Endothelial cell of umbilical vein (primary cell): ENCODE measurements at regions of chr10 and their contacts with region 1.

Region 1: GRCh38 chr10:103231047-103231551 is 14.6 kb upstream of the RPEL1 start:
- DNase-seq: peak; percentile 92
- H3K4me3 ChIP-seq: no peak overlapping the region
- H3K27ac ChIP-seq: peak overlapping the region; percentile 97
- H3K4me1 ChIP-seq: peaks cover 32% of the 10 kb centered on the region
- H3K27me3 ChIP-seq: no peaks in the 10 kb centered on the region
- CTCF ChIP-seq: no peak
- POLR2A ChIP-seq: peak; percentile 60

Region 2: GRCh38 chr10:103181244-103181643 is 49.9 kb before region 1 on chr10:
- CTCF ChIA-PET with region 1: interaction called, 5 read pairs
- POLR2A ChIA-PET with region 1: no interaction called
- dilution Hi-C with region 1: no loop called
- intact Hi-C with region 1: loop called (anchors 1 kb)
- DNase-seq: peak; percentile 91
- H3K4me3 ChIP-seq: no peak overlapping the region
- H3K27ac ChIP-seq: peak overlapping the region; percentile 51
- H3K4me1 ChIP-seq: peaks cover 25% of the 10 kb centered on the region
- H3K27me3 ChIP-seq: no peaks in the 10 kb centered on the region
- CTCF ChIP-seq: no peak
- POLR2A ChIP-seq: no peak

Region 3: GRCh38 chr10:103262229-103262628 is 31.1 kb after region 1 on chr10:
- CTCF ChIA-PET with region 1: no interaction called
- POLR2A ChIA-PET with region 1: no interaction called
- dilution Hi-C with region 1: no loop called
- intact Hi-C with region 1: no loop called
- DNase-seq: no peak
- H3K4me3 ChIP-seq: no peak overlapping the region
- H3K27ac ChIP-seq: no peak overlapping the region
- H3K4me1 ChIP-seq: no peaks in the 10 kb centered on the region
- H3K27me3 ChIP-seq: peaks cover 7 to 8% of the 10 kb centered on the region in 2 experiments
- CTCF ChIP-seq: no peak
- POLR2A ChIP-seq: no peak